ENCODE measurements at regions of chr22 and their contacts with region 1.

Region 1: GRCh38 chr22:19432133-19432851 is at the start of gene MRPL40:
- DNase-seq: peak; percentile 97
- total RNA-seq, gene MRPL40: 44.1 TPM

Region 2: DNA sequence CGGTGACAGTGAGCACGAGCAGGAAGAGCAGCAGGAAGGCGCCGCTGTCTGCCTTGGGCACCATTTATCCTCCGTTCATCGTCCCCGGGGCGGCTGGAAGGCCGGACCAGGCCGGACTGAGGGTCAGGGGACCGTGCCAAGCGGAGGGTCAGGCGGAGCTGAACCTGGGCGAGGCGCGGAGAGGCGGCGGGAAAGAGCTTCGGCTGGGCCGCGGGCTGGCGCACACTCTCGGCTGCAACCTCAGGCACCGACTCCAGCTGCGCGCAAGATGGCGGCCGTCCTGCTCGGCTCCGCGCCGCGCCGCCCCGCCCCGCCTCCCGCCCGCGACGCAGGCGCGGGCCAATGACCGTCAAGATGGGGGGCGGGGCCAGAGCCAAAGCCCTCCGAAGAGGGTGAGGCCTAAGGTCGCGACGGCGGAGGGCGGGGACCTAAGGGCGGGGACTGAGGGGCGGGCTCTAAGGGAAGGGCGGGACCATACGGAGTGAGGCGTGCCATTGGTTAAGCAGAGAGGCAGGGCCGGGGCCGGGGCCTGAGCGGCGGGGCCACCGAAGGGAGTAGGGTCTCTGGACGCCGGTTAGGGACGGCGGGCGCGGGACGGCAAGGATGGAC is 310.0 kb before region 1 on chr22 and contains the start of gene DGCR2:
- intact Hi-C with region 1: loop called (anchors 10 kb)
- DNase-seq: peak; percentile 99
- total RNA-seq, gene DGCR2: 35.2 TPM

Region 3: DNA sequence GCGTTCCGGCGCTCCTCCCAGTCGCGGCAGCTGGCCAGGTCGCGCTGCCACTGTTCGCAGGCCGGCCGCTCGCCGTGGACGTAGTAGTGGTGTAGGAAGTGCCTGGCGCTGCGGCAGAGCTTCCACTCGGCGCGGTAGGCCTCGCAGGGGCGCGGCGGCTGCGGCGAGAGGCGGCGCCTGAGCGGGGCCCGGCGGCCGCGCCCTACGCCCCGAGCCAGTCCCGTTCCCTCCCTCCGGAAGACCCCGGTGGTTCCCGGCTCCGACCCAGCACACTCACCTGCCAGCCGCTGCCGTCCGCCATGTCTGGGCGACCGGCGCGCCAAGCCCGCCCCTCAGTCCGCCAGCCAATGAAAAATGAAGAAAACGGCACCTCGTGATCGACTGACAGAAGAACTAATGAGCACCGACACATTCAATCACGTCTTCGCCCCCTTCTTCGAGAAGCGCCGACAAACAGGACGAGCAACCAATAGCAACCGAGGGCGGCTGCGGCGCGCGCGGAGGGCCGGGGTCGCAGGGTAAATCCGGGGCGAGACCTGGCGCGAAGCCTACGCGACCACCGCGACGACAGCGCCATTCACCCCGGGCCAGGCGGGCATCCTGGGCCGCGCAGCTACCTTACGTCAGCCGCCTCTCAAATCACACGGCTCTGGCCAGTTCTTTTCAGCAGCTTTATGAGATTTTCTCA is 15.2 kb after region 1 on chr22 and contains the start of gene C22orf39:
- intact Hi-C with region 1: loop called (anchors 2 kb)
- DNase-seq: peak; percentile 95
- total RNA-seq, gene C22orf39: 48.7 TPM

Region 4: DNA sequence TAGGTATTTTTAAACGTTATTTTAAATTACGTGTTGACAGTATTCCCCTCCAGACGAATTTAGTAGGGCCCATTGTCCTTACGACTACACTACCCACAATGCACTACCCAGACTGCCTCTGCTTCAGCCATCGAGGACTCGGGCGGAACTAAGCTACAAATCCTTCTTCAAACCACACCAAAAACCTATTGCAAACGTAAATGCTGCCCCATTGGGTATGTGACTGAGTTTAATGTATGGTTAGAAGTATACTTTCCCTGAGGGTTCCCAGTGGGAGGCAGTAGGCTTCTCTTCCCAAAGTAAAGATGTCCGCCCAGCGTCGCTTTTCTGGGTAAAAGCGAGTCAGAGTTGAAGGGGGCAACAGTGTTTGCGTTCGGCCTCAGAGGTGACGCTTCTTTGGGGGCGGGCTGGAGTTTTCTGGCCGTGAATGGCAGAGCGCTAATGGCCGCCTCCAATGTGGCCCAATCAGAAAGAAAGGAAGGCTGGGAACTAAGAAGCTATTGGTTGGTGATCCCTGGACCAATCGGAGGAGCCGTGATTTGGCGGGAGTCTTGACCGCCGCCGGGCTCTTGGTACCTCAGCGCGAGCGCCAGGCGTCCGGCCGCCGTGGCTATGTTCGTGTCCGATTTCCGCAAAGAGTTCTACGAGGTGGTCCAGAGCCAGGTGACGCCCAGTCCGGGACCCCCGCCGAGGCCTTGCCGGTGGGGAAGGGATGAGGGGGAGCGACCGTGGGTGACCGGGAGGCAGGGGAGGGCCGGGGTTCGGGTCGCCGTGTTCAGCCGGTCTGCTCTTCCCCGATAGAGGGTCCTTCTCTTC is 47.3 kb after region 1 on chr22 and contains the start of gene CDC45:
- intact Hi-C with region 1: loop called (anchors 2 kb)
- DNase-seq: peak; percentile 98
- total RNA-seq, gene CDC45: not detected

Region 5: GRCh38 chr22:19559324-19559811 is 127.1 kb after region 1 on chr22:
- intact Hi-C with region 1: no loop called
- DNase-seq: peak; percentile 72

Measured in cardiac septum (tissue), 1 donor.